PC-9 (cell line): ENCODE measurements at regions of chr19 and their contacts with region 1.

Region 1: GRCh38 chr19:35648017-35648961 is at the start of gene COX6B1:
- DNase-seq: peak; percentile 91 to 96
- H3K4me3 ChIP-seq: peak within 1 kb of the TSS; percentile 78
- H3K27ac ChIP-seq: peak within 1 kb of the TSS; percentile 2; the same call in 1 of the 2 replicates
- H3K4me1 ChIP-seq: peaks cover 11% of the 10 kb centered on the region; the same call in 1 of the 2 replicates
- H3K27me3 ChIP-seq: no peaks in the 10 kb centered on the region
- CTCF ChIP-seq: no peak
- total RNA-seq, gene COX6B1: 441 and 489 TPM in 2 replicates

Region 2: GRCh38 chr19:35160629-35161433 is 487.5 kb before region 1 on chr19:
- CTCF ChIA-PET with region 1: no interaction called
- POLR2A ChIA-PET with region 1: no interaction called
- intact Hi-C with region 1: no loop called
- DNase-seq: no peak
- H3K4me3 ChIP-seq: no peak overlapping the region
- H3K27ac ChIP-seq: peak overlapping the region; percentile 97
- H3K4me1 ChIP-seq: peaks cover 69% of the 10 kb centered on the region
- H3K27me3 ChIP-seq: no peaks in the 10 kb centered on the region
- CTCF ChIP-seq: no peak

Region 3: GRCh38 chr19:35545001-35545911 is 103.0 kb before region 1 on chr19 and contains the start of gene TMEM147:
- CTCF ChIA-PET with region 1: no interaction called
- POLR2A ChIA-PET with region 1: no interaction called
- intact Hi-C with region 1: loop called (anchors 5 kb)
- DNase-seq: peak; percentile 66 to 90
- H3K4me3 ChIP-seq: peak within 1 kb of the TSS; percentile 100
- H3K27ac ChIP-seq: peak within 1 kb of the TSS; percentile 59
- H3K4me1 ChIP-seq: peaks cover 14% of the 10 kb centered on the region
- H3K27me3 ChIP-seq: no peaks in the 10 kb centered on the region
- CTCF ChIP-seq: no peak
- total RNA-seq, gene TMEM147: 82.6 and 95.9 TPM in 2 replicates